Upper lobe of right lung (tissue), 1 donor: ENCODE measurements at regions of chr5 and their contacts with region 1.

Region 1: GRCh38 chr5:902129-902916 is 9.6 kb downstream of the TRIP13 start:
- DNase-seq: no peak
- ATAC-seq: peak; percentile 51
- H3K4me3 ChIP-seq: no peak overlapping the region
- H3K27ac ChIP-seq: no peak overlapping the region
- H3K4me1 ChIP-seq: no peaks in the 10 kb centered on the region
- H3K27me3 ChIP-seq: no peaks in the 10 kb centered on the region
- CTCF ChIP-seq: no peak

Region 2: GRCh38 chr5:671459-672328 is 230.6 kb before region 1 on chr5:
- intact Hi-C with region 1: loop called (anchors 5 kb)
- DNase-seq: peak; percentile 87
- ATAC-seq: peak; percentile 83
- H3K4me3 ChIP-seq: no peak overlapping the region
- H3K27ac ChIP-seq: peak overlapping the region; percentile 36
- H3K4me1 ChIP-seq: peaks cover 23% of the 10 kb centered on the region
- H3K27me3 ChIP-seq: peaks cover 8% of the 10 kb centered on the region
- CTCF ChIP-seq: peak; percentile 90